ENCODE measurements at regions of chr14 and their contacts with region 1.

Region 1: GRCh38 chr14:79011091-79011919 is 841.1 kb downstream of the NRXN3 start:
- DNase-seq: peak; percentile 45
- H3K4me3 Mint-ChIP-seq: no peak overlapping the region
- H3K27ac Mint-ChIP-seq: no peak overlapping the region
- H3K4me1 Mint-ChIP-seq: peaks cover 11% of the 10 kb centered on the region
- H3K27me3 Mint-ChIP-seq: peaks cover 3% of the 10 kb centered on the region
- CTCF ChIP-seq: peak; percentile 58

Region 2: GRCh38 chr14:79074510-79074909 is 63.2 kb after region 1 on chr14:
- CTCF ChIA-PET with region 1: no interaction called
- POLR2A ChIA-PET with region 1: no interaction called
- intact Hi-C with region 1: no loop called
- DNase-seq: no peak
- H3K4me3 Mint-ChIP-seq: no peak overlapping the region
- H3K27ac Mint-ChIP-seq: no peak overlapping the region
- H3K4me1 Mint-ChIP-seq: no peaks in the 10 kb centered on the region
- H3K27me3 Mint-ChIP-seq: no peaks in the 10 kb centered on the region
- CTCF ChIP-seq: no peak

Region 3: DNA sequence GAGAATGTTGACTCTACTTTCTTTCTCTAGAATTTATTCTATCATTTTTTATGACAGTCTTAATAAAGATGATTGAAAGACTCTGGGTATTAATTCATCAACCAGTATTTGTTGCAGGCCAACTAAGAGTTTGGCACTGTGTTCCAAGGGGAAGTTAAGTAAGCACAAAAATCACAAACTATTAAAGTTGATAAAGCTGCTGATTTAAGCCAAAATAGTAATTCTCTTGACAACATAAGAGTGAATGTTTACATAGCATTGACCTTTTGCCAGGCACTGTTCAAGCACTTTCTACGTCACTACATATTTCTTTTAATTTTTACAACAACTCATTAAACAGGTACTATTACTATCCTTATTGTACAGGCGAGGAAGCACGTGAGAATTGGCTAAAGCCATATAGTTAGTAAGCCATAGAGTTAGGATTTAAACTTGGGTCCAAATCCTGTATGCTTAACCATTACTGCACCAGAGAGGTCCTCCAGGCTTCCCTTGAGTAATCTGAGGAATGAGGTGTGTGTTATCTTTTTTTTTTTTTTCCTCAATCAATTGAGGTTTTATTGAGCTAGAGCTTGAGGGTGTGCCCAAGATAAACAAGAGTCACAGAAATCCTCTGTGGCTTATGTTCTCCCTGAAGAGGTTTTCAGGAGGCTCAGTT is 190.4 kb after region 1 on chr14:
- CTCF ChIA-PET with region 1: no interaction called
- POLR2A ChIA-PET with region 1: no interaction called
- intact Hi-C with region 1: loop called (anchors 10 kb)
- DNase-seq: no peak
- H3K4me3 Mint-ChIP-seq: no peak overlapping the region
- H3K27ac Mint-ChIP-seq: no peak overlapping the region
- H3K4me1 Mint-ChIP-seq: no peaks in the 10 kb centered on the region
- H3K27me3 Mint-ChIP-seq: no peaks in the 10 kb centered on the region
- CTCF ChIP-seq: no peak

Region 4: DNA sequence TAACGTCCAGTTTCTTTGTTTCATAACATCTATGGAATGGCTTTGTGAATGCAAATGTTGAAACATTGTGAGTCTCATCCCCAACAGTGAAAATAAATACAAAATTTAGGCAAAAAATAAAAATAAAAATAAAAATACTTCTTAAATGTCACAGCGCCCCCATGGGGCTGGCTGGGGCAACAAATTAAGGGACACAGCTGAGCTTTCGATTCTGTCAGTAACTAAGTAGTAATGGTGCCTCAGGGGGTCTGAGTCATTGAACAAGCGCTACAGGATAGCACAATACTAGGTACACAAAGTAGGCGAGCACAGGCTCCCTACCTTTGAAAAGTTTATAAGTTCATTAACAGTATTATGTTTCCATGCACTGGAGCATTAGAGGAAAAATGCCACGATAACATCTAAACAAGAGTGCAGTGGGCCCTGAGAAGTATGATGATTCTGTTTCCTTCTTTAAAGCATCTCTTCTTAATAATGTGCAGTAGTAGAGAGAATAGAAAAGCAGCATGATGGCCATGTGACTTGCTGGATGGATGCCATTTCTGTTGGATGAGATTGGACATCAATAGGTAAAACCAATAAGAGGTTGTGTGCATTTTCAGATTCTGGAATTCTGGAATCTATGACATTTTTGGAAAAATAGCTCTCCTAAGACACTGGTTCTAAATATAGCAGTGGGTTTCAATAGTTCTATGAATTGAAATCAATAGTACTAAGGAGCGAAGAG is 532.8 kb after region 1 on chr14:
- CTCF ChIA-PET with region 1: no interaction called
- POLR2A ChIA-PET with region 1: no interaction called
- intact Hi-C with region 1: loop called (anchors 10 kb)
- DNase-seq: peak; percentile 55
- H3K4me3 Mint-ChIP-seq: no peak overlapping the region
- H3K27ac Mint-ChIP-seq: no peak overlapping the region
- H3K4me1 Mint-ChIP-seq: no peaks in the 10 kb centered on the region
- H3K27me3 Mint-ChIP-seq: peaks cover 11% of the 10 kb centered on the region
- CTCF ChIP-seq: peak; percentile 28

Region 5: DNA sequence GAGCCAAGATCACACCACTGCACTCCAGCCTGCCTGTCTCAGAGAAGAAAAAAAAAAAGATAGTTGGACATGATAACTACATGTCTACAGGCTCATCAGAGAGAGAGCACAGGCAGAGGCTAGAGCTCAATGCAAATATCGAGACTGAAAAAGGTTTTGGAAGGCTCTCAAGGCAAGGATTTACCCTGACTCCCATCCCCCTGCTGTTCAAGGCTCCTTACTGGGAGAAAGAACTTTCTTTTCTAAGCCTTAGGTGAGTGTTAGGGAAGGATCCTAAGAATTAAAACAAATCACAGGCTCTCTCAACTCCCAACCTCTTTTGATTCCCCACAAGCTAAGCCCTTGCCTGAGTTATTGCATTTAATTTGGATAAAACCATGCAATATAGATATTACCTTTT is 674.9 kb after region 1 on chr14:
- CTCF ChIA-PET with region 1: interaction called, 5 read pairs
- POLR2A ChIA-PET with region 1: no interaction called
- intact Hi-C with region 1: loop called (anchors 2 kb)
- DNase-seq: no peak
- H3K4me3 Mint-ChIP-seq: no peak overlapping the region
- H3K27ac Mint-ChIP-seq: no peak overlapping the region
- H3K4me1 Mint-ChIP-seq: no peaks in the 10 kb centered on the region
- H3K27me3 Mint-ChIP-seq: peaks cover 41% of the 10 kb centered on the region
- CTCF ChIP-seq: no peak

Region 6: DNA sequence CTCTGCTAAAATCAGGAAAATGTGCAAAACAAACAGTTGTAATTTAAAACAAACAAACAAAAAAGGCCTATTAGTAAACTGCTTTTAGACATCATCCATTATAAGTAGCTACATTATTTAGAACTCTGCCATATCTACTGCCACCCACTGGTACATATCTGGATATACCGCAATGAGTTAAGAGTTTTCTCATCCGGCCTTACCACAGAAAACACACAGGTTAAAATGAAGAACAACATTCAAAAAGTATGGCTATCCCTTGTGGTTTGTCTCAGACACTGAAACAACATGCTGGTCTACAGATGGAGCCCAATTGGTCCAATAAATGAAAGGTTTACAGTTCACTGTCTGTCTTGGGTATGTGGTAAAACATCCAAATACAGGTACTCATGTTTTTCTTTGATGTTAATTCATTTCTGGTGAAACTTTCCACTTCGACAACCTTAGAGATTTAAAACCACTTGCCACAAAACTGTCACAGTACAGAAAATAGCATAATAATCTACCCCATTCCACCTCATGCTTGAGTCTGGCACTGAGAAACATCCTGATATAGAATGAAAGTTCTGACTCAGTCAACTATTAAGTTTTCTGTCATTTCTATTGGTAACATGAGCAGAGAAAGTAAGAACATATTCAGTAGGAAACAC is 1575.9 kb after region 1 on chr14:
- CTCF ChIA-PET with region 1: no interaction called
- POLR2A ChIA-PET with region 1: no interaction called
- intact Hi-C with region 1: loop called (anchors 10 kb)
- DNase-seq: peak; percentile 46
- H3K4me3 Mint-ChIP-seq: no peak overlapping the region
- H3K27ac Mint-ChIP-seq: peak overlapping the region; percentile 74
- H3K4me1 Mint-ChIP-seq: peaks cover 46% of the 10 kb centered on the region
- H3K27me3 Mint-ChIP-seq: no peaks in the 10 kb centered on the region
- CTCF ChIP-seq: peak; percentile 46

Measured in MCF 10A (cell line).